CD4-positive, alpha-beta T cell (primary cell): ENCODE measurements at regions of chr2 and their contacts with region 1.

Region 1: DNA sequence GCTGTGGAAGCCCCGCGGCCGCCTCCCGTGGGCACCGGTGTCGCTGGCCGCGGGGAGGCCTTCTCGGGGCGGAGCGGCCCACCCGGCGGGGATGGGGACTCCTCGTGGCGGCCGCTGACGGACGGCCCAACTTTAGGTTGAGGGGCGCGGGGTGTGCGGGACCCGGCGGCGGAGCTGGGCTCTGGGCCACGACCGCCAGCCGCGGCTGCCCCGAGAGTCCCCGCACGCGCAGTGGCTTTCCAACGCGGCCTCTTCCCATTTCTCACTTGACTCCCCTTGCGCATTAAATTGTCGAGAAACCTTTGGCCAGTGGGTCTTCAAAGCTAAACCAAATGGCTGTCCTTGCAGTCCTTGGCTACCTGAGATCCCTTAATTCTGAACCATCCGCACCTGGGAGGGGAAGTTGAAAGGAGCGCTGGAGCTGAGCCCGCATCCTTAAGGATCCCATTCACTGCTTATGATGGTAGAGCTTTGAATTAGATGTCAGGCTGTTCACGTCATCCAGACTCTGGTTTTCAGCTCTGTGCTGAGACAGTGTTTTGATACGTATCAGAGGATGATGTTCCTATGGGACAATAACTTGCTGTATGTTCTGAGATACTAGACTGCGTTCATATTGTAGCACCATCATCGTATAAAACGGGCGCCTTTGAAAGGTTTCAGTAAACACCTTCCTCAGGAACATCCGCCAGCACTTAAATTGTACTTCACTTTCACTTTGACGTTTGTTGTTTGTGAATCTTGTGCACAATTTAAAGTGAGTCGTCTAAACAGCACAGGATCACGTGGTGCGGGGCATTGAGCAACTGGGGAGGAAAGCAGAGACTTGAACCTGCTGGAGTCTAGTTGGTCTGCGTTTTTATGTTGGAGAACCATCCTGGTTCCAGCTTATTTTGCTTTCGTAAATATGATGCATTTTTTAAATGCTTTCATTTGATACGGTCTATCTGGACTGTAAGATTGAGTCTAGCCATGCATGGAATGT is 874 bp downstream of the CLIP4 start:
- DNase-seq: peak; percentile 46 to 88 (median 61)
- ATAC-seq: peak; percentile 72
- H3K4me3 ChIP-seq: peak overlapping the region; percentile 85
- H3K4me3 Mint-ChIP-seq: peak overlapping the region; percentile 97
- H3K27ac ChIP-seq: peak overlapping the region; percentile 75 to 88
- H3K27ac Mint-ChIP-seq: peak overlapping the region; percentile 100
- H3K4me1 ChIP-seq: peaks cover 23% of the 10 kb centered on the region
- H3K4me1 Mint-ChIP-seq: peaks cover 51% of the 10 kb centered on the region
- H3K27me3 ChIP-seq: no peaks in the 10 kb centered on the region
- H3K27me3 Mint-ChIP-seq: no peaks in the 10 kb centered on the region
- CTCF ChIP-seq: no peak

Region 2: GRCh38 chr2:28736034-28736433 is 380.1 kb before region 1 on chr2:
- CTCF ChIA-PET with region 1: no interaction called
- POLR2A ChIA-PET with region 1: no interaction called
- intact Hi-C with region 1: no loop called
- DNase-seq: no peak
- ATAC-seq: no peak
- H3K4me3 ChIP-seq: no peak overlapping the region
- H3K4me3 Mint-ChIP-seq: no peak overlapping the region
- H3K27ac ChIP-seq: no peak overlapping the region
- H3K27ac Mint-ChIP-seq: no peak overlapping the region
- H3K4me1 ChIP-seq: peaks cover 3% of the 10 kb centered on the region
- H3K4me1 Mint-ChIP-seq: no peaks in the 10 kb centered on the region
- H3K27me3 ChIP-seq: no peaks in the 10 kb centered on the region
- H3K27me3 Mint-ChIP-seq: no peaks in the 10 kb centered on the region
- CTCF ChIP-seq: no peak

Region 3: DNA sequence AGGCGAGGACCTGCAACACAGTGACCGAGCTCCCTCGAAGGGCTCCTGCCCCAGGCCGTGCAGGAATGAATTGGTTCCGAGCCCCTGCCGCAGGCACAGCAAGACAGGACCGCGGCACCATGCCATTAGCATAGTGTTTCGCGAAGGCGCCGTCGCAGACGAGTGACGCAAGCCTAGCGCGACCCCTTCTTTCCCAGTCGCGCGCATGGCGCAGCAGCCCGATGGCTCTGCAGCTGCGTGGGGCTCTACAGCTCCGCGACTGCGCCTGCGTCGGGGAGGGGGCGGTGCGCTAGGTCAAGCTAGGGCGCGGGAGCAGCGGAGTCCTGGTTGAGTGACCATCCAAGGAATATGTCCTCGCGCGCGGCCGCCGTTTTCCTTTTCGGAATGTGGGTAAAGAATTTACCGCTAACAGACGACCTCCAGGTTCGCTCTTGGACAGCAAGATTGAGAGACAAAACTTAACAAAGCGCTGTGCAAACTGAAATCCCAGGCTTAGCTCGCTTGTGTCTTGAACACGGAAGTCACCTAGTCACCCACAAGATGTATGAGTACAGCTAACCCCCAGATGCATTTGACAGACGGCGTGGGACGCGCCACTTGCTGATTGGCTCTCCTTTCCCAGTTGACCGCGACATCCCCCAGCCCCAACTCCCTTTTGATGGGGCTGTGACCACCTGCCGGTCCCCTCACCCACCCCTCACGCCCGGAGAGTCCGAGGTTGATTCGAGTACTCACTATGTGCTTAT is 245.8 kb before region 1 on chr2 and contains the start of gene TRMT61B:
- CTCF ChIA-PET with region 1: no interaction called
- POLR2A ChIA-PET with region 1: interaction called, 20 read pairs
- intact Hi-C with region 1: loop called in 1 of 2 experiments (anchors 1 kb)
- DNase-seq: peak; percentile 92 to 99 (median 97)
- ATAC-seq: peak; percentile 92
- H3K4me3 ChIP-seq: peak within 1 kb of the TSS; percentile 88
- H3K4me3 Mint-ChIP-seq: peak within 1 kb of the TSS; percentile 99
- H3K27ac ChIP-seq: peak within 1 kb of the TSS; percentile 82 to 93
- H3K27ac Mint-ChIP-seq: peak within 1 kb of the TSS; percentile 99
- H3K4me1 ChIP-seq: peaks cover 41% of the 10 kb centered on the region
- H3K4me1 Mint-ChIP-seq: peaks cover 37% of the 10 kb centered on the region
- H3K27me3 ChIP-seq: no peaks in the 10 kb centered on the region
- H3K27me3 Mint-ChIP-seq: peaks cover 7% of the 10 kb centered on the region
- CTCF ChIP-seq: no peak
- total RNA-seq, gene TRMT61B: 18.7 to 20.8 TPM

Region 4: DNA sequence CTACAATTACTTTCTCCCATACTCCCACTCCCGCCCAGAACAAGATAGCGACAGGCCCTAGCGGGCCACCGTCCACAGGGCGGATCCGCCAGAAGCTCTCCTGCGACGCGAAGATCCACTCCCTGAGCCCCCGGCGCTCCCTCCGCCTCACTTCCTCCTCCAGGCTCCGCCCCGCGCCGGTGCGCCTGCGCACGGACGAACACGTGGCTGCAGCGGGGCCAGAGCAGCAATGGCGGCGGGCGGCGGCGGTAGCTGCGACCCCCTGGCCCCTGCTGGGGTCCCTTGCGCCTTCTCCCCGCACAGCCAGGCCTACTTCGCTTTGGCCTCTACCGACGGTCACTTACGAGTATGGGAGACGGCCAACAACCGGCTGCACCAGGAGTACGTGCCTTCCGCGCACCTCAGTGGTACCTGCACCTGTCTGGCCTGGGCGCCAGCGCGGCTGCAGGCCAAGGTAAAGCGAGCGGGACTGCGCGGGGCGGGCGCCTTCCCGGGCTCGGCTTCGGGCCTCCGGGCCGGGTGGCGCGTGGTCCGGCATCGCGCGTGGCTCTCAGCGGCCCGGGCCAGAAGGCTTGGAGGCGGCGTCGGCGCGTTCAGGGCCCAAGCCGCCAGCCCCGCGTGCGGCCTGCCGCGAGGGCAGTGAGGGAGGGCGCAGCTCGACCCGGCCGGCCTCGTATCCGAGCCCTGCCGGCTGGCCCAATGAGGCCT is 221.5 kb before region 1 on chr2 and contains the start of gene WDR43:
- CTCF ChIA-PET with region 1: no interaction called
- POLR2A ChIA-PET with region 1: interaction called, 21 read pairs
- intact Hi-C with region 1: loop called in 1 of 2 experiments (anchors 10 kb)
- DNase-seq: peak; percentile 90 to 99 (median 97)
- ATAC-seq: peak; percentile 97
- H3K4me3 ChIP-seq: peak within 1 kb of the TSS; percentile 89
- H3K4me3 Mint-ChIP-seq: peak within 1 kb of the TSS; percentile 97
- H3K27ac ChIP-seq: peak within 1 kb of the TSS; percentile 55 to 59
- H3K27ac Mint-ChIP-seq: peak within 1 kb of the TSS; percentile 91
- H3K4me1 ChIP-seq: peaks cover 24% of the 10 kb centered on the region
- H3K4me1 Mint-ChIP-seq: peaks cover 49% of the 10 kb centered on the region
- H3K27me3 ChIP-seq: no peaks in the 10 kb centered on the region
- H3K27me3 Mint-ChIP-seq: no peaks in the 10 kb centered on the region
- CTCF ChIP-seq: no peak
- total RNA-seq, gene WDR43: 62.4 to 73.2 TPM

Region 5: DNA sequence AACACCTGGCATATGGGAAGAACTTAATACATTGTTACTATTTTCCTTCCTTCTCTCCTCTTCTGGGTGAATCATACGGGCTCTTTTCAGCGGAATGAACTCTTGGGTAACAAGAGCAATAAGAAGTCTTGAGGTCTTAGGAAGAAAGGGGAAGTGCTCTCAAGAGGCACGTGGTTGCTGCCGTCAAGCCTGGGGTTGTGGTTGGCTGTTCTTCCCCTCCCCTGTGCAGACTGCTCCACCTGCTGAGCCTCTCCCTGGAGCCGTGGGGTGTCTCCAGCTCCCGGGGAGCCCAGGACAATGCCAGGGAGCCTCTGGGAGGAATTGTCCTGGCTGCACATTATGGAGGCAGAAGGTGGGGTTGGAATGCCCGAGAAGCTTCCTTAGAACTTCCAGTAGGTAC is 115.6 kb before region 1 on chr2:
- CTCF ChIA-PET with region 1: no interaction called
- POLR2A ChIA-PET with region 1: interaction called, 12 read pairs
- intact Hi-C with region 1: no loop called
- DNase-seq: peak in 12 of 14 experiments; percentile 24 to 88 (median 43)
- ATAC-seq: peak; percentile 93
- H3K4me3 ChIP-seq: no peak overlapping the region
- H3K4me3 Mint-ChIP-seq: peak overlapping the region; percentile 39
- H3K27ac ChIP-seq: peak overlapping the region; percentile 33 to 44
- H3K27ac Mint-ChIP-seq: peak overlapping the region; percentile 92
- H3K4me1 ChIP-seq: peaks cover 45% of the 10 kb centered on the region
- H3K4me1 Mint-ChIP-seq: peaks cover 39% of the 10 kb centered on the region
- H3K27me3 ChIP-seq: no peaks in the 10 kb centered on the region
- H3K27me3 Mint-ChIP-seq: no peaks in the 10 kb centered on the region
- CTCF ChIP-seq: no peak

Region 6: GRCh38 chr2:29055601-29056000 is 60.5 kb before region 1 on chr2:
- CTCF ChIA-PET with region 1: no interaction called
- POLR2A ChIA-PET with region 1: no interaction called
- intact Hi-C with region 1: no loop called
- DNase-seq: no peak
- ATAC-seq: no peak
- H3K4me3 ChIP-seq: no peak overlapping the region
- H3K4me3 Mint-ChIP-seq: no peak overlapping the region
- H3K27ac ChIP-seq: no peak overlapping the region
- H3K27ac Mint-ChIP-seq: no peak overlapping the region
- H3K4me1 ChIP-seq: no peaks in the 10 kb centered on the region
- H3K4me1 Mint-ChIP-seq: peaks cover 8% of the 10 kb centered on the region
- H3K27me3 ChIP-seq: no peaks in the 10 kb centered on the region
- H3K27me3 Mint-ChIP-seq: no peaks in the 10 kb centered on the region
- CTCF ChIP-seq: no peak

Region 7: GRCh38 chr2:29187926-29188325 is 71.8 kb after region 1 on chr2:
- CTCF ChIA-PET with region 1: no interaction called
- POLR2A ChIA-PET with region 1: no interaction called
- intact Hi-C with region 1: loop called in 1 of 2 experiments (anchors 5 kb)
- DNase-seq: no peak
- ATAC-seq: no peak
- H3K4me3 ChIP-seq: no peak overlapping the region
- H3K4me3 Mint-ChIP-seq: no peak overlapping the region
- H3K27ac ChIP-seq: no peak overlapping the region
- H3K27ac Mint-ChIP-seq: no peak overlapping the region
- H3K4me1 ChIP-seq: peaks cover 4% of the 10 kb centered on the region
- H3K4me1 Mint-ChIP-seq: peaks cover 16% of the 10 kb centered on the region
- H3K27me3 ChIP-seq: no peaks in the 10 kb centered on the region
- H3K27me3 Mint-ChIP-seq: no peaks in the 10 kb centered on the region
- CTCF ChIP-seq: no peak